ENCODE measurements at regions of chr3 and their contacts with region 1.

Region 1: GRCh38 chr3:16048435-16049318 is 125.8 kb upstream of the GALNT15 start:
- DNase-seq: peak; percentile 45
- ATAC-seq: peak; percentile 88 to 93

Region 2: GRCh38 chr3:15815696-15816095 is 233.0 kb before region 1 on chr3:
- intact Hi-C with region 1: loop called in 1 of 2 experiments (anchors 5 kb)
- DNase-seq: no peak
- ATAC-seq: peak; percentile 42 to 55

Region 3: GRCh38 chr3:16177962-16178627 is 129.4 kb after region 1 on chr3:
- intact Hi-C with region 1: loop called (anchors 1 to 5 kb)
- DNase-seq: peak; percentile 83
- ATAC-seq: peak; percentile 68 to 76

Region 4: GRCh38 chr3:16240283-16241023 is 191.8 kb after region 1 on chr3:
- intact Hi-C with region 1: loop called in 1 of 2 experiments (anchors 5 kb)
- DNase-seq: no peak
- ATAC-seq: peak in 1 of 2 donors; percentile 41

Region 5: DNA sequence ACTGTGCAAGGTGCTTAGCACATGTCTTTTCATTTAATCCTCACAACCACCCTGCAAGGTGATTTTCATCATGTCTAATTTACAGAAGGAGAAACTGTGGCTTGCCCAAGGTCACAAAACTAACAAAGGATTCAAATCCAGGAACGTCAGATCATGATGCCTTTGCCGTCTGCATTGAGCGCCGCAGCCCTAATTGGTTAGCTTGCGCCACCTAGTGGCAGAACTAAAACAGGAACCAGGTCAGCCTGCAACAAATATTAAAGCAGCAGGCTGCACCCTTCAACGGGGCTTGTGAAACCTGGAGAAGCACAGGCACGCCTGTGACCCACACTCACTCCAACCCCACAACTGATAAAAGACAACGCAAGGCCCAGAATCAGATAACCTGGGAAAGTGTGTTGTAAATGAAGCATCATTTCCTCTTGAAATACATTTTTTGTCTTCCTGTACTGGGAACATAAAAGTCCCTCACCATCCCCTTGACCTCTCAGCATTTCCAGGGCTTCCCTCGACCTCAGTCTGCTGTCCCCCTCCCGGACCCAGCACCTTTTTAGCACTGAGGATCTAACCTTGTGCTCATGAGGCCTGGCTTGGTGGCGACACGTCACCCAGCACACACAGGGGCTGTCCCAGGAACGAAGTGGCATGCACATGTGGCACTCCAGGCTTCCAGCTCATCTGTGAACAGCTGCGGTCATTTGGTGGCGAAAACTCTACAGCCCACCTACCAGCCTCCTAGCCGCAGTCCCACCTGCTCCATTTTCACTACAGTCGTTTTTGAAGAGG is 198.8 kb after region 1 on chr3:
- intact Hi-C with region 1: loop called (anchors 1 to 5 kb)
- DNase-seq: peak; percentile 79
- ATAC-seq: peak; percentile 58 to 68

Region 6: DNA sequence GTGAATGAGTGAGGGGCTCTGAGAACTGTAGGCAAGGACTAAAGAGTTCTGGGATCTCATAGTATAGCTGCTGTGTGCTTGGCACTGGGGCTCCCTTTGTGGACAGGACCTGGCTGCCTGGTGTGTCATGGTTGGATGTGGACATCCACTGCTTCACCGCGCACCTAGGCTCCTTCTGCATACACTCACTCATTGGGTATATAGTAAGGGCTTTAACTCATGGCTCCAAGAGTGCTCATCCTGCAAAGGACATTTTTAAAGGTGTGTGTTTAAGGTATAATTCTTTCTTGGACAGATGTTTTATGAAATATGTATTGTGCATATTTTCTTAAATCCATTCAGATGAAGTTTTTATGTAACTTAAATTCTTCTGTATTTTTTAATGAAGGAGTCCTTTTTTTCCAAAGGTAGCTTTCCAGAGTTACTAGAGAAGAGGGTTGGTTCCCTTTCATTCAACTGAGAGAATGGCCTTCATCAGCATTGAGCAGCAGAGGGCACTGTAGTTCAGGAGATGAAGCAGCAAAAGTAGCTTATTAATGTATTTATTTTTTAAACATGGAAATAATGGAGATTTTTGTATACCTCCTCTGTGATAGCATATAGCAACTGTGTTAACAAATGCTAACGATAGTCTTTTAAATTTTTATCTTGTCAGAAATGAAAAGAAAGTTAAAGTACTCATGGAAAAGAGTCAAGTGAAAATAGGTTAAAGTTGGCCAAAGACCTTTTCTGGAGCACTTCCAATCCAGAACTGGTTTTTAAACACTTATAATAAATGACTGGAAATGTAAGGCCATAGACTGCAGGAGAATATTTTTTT is 241.5 kb after region 1 on chr3:
- intact Hi-C with region 1: no loop called
- DNase-seq: peak; percentile 37
- ATAC-seq: peak; percentile 40 to 42